ENCODE measurements at regions of chr3 and their contacts with region 1.

Region 1: GRCh38 chr3:106609666-106610301 is 741.0 kb upstream of the CBLB start:
- DNase-seq: peak; percentile 89
- ATAC-seq: peak; percentile 80
- H3K4me3 ChIP-seq: no peak overlapping the region
- H3K27ac ChIP-seq: no peak overlapping the region
- H3K4me1 ChIP-seq: peaks cover 31% of the 10 kb centered on the region
- H3K27me3 ChIP-seq: no peaks in the 10 kb centered on the region
- CTCF ChIP-seq: peak; percentile 96

Region 2: GRCh38 chr3:105965384-105965783 is 644.4 kb before region 1 on chr3:
- CTCF ChIA-PET with region 1: no interaction called
- POLR2A ChIA-PET with region 1: no interaction called
- intact Hi-C with region 1: loop called (anchors 5 kb)
- DNase-seq: no peak
- ATAC-seq: no peak
- H3K4me3 ChIP-seq: no peak overlapping the region
- H3K27ac ChIP-seq: no peak overlapping the region
- H3K4me1 ChIP-seq: peaks cover 38% of the 10 kb centered on the region
- H3K27me3 ChIP-seq: no peaks in the 10 kb centered on the region
- CTCF ChIP-seq: no peak

Region 3: GRCh38 chr3:106030618-106030945 is 579.2 kb before region 1 on chr3:
- CTCF ChIA-PET with region 1: no interaction called
- POLR2A ChIA-PET with region 1: no interaction called
- intact Hi-C with region 1: loop called (anchors 5 kb)
- DNase-seq: peak; percentile 87
- ATAC-seq: peak; percentile 82
- H3K4me3 ChIP-seq: peak overlapping the region; percentile 30; the same call in 1 of the 2 replicates
- H3K27ac ChIP-seq: peak overlapping the region; percentile 82
- H3K4me1 ChIP-seq: peaks cover 54% of the 10 kb centered on the region
- H3K27me3 ChIP-seq: no peaks in the 10 kb centered on the region
- CTCF ChIP-seq: no peak

Region 4: DNA sequence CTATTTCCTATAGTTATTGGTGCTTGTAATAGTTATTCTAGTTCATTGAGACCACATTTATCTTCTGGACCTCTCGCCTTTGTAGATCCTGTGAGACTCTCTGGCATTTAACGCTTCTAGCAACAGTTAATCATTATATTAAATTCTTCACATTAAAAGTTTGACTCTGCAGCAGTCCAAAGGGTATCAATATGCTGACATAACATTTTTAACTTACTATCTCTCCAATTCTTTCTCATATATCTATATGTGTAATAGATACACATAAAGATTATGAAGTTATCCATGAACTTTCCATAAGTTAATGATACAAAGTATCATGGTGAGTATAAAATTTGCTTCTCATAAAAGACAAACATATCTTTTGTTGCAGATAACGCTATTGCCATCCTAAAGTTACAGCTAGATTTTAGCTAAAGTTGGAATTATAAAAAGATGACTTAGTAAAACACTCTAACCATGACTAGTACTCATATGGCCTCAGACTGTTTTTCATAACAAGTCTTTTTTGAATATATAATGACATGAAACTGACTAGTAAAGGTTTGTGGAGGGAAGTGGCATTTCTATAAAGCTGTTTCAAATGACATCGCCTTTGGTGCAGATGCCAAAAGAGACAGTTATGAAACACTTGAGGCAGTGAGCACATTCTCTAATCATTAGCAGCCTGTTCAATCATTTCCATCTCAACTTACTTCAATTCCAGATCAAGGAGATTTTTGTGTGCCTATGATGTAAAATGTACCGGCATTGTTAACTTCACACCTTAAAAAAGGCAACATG is 361.7 kb before region 1 on chr3:
- CTCF ChIA-PET with region 1: interaction called, 4 read pairs
- POLR2A ChIA-PET with region 1: no interaction called
- intact Hi-C with region 1: loop called (anchors 10 kb)
- DNase-seq: no peak
- ATAC-seq: no peak
- H3K4me3 ChIP-seq: no peak overlapping the region
- H3K27ac ChIP-seq: no peak overlapping the region
- H3K4me1 ChIP-seq: peaks cover 10% of the 10 kb centered on the region
- H3K27me3 ChIP-seq: no peaks in the 10 kb centered on the region
- CTCF ChIP-seq: no peak

Region 5: DNA sequence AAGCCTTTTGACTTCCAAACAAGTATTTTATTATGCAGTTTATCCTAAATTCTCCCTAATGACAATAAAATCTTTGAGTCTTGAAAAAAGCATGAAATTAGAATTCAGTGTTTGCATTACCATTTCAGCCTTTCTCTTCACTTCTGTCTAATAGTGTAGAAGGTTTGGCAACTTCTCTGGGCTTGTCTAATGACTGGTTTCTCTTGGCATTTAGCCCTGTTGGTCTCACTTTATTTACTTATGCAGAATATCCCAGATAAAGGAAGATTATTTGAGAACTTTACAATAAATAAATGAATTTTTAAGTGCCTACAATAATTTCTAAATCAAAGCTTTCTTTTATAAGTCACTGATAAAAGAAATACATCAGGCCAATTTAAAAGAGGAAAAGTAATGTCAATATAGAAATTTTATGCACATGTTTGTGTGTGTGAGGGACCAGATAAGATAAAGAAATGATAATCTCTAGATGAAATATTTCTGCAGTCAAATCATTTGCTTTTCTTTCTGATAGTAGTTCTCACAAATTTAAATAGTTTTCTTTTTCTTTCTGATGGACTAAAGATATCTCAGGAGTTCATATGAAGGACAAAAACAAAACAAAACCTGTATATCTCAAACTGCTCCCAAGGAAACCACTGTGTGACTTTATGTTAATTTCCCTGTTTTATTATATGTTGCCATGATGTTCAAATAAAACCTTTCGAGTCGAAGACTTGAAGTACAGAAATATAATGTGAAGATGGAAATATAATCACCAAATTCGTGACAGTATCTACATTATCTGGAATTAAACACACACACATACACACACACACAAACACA is 207.9 kb before region 1 on chr3:
- CTCF ChIA-PET with region 1: no interaction called
- POLR2A ChIA-PET with region 1: no interaction called
- intact Hi-C with region 1: loop called (anchors 5 kb)
- DNase-seq: peak; percentile 48
- ATAC-seq: 0 out of 2 replicates have a peak, but pooled peaks have one; percentile 38
- H3K4me3 ChIP-seq: no peak overlapping the region
- H3K27ac ChIP-seq: no peak overlapping the region
- H3K4me1 ChIP-seq: no peaks in the 10 kb centered on the region
- H3K27me3 ChIP-seq: no peaks in the 10 kb centered on the region
- CTCF ChIP-seq: no peak

Region 6: DNA sequence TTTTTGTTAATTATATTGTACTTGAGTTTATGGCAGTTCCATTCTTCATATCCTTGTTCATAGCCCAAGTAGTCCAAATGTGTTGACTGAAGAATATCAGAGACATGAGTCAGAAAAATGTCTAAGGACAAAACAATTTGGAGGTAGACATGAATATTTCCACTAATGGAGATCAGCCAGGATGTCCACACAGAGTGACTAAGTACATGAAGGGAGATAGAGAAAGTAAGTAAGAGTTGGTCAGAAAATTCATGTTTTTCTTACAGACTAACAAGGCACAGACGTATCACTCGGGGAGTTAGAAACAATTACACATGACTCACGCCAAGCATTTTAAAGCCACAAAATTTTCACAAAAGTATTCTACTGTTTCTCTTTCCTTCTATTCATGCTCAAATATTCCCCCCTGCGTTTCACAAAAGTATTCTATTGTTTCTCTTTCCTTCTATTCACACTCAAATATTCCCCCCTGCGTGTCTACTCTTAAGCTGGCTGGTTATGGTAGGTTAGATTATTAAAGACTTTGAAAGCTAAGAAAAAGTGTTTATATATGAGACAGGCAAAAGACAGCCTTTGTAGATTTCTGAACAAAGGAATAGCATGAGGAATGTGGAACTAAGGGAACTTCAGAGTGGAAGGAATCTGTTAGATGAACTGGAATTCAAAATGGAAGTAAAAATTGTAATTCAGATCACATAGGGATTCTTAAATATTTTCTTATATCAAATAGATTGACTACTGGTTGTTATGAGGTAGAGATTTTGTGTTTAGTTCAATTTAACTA is 118.7 kb after region 1 on chr3:
- CTCF ChIA-PET with region 1: no interaction called
- POLR2A ChIA-PET with region 1: no interaction called
- intact Hi-C with region 1: loop called (anchors 1 kb)
- DNase-seq: peak; percentile 98
- ATAC-seq: peak; percentile 98
- H3K4me3 ChIP-seq: peak overlapping the region; percentile 55
- H3K27ac ChIP-seq: peak overlapping the region; percentile 75
- H3K4me1 ChIP-seq: peaks cover 27% of the 10 kb centered on the region
- H3K27me3 ChIP-seq: no peaks in the 10 kb centered on the region
- CTCF ChIP-seq: no peak

Region 7: DNA sequence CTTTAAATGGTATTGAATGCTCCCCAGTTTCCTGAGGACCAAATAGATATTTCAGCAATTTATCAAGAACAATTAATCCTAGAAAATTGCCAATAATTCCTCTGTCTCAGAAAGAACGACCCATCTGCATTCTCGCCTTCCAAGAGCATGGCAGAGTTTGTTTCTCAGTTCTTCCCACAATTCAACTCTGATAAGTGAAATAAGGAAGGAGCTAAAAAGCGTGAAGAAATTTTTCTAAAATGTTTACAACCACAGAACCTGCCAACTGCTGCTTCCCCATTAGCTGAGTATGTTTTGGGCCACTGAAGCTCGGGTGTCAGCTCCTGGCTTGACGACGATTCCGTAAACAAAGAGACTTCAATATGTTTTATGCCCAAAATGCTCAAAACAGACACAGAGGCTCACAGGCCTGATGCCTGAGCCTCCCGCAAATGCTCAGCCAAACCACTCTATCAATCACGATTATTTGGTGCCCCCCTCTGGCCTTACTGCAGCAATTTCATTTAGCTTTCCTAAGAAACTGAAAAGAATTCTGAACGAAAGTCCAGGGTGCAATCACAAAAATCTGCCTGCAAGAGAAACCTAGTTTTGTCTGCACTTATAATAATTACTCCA is 508.2 kb after region 1 on chr3:
- CTCF ChIA-PET with region 1: interaction called, 3 read pairs
- POLR2A ChIA-PET with region 1: no interaction called
- intact Hi-C with region 1: loop called (anchors 1 kb)
- DNase-seq: peak; percentile 78
- ATAC-seq: peak; percentile 74
- H3K4me3 ChIP-seq: no peak overlapping the region
- H3K27ac ChIP-seq: no peak overlapping the region
- H3K4me1 ChIP-seq: peaks cover 9% of the 10 kb centered on the region; the same call in 1 of the 2 replicates
- H3K27me3 ChIP-seq: no peaks in the 10 kb centered on the region
- CTCF ChIP-seq: peak; percentile 90